Activated CD4-positive, alpha-beta T cell treated with anti-CD3 and anti-CD28 coated beads for 36 hours (primary cell): ENCODE measurements at regions of chr1 and their contacts with region 1.

Region 1: GRCh38 chr1:151008190-151008860 is at the start of gene PRUNE1:
- DNase-seq: peak; percentile 99
- ATAC-seq: peak; percentile 84
- H3K4me3 Mint-ChIP-seq: peak within 1 kb of the TSS; percentile 90
- H3K27ac Mint-ChIP-seq: peak within 1 kb of the TSS; percentile 96
- H3K4me1 Mint-ChIP-seq: peaks cover 63% of the 10 kb centered on the region
- H3K27me3 Mint-ChIP-seq: no peaks in the 10 kb centered on the region
- total RNA-seq, gene PRUNE1: 13.6 to 18.6 TPM

Region 2: GRCh38 chr1:150363426-150364230 is 644.7 kb before region 1 on chr1 and contains the start of gene RPRD2:
- CTCF ChIA-PET with region 1: no interaction called
- POLR2A ChIA-PET with region 1: no interaction called
- intact Hi-C with region 1: loop called in 1 of 2 experiments (anchors 2 kb)
- DNase-seq: peak; percentile 99
- ATAC-seq: peak; percentile 95
- H3K4me3 Mint-ChIP-seq: peak within 1 kb of the TSS; percentile 91
- H3K27ac Mint-ChIP-seq: peak within 1 kb of the TSS; percentile 99
- H3K4me1 Mint-ChIP-seq: peaks cover 13% of the 10 kb centered on the region
- H3K27me3 Mint-ChIP-seq: no peaks in the 10 kb centered on the region
- total RNA-seq, gene RPRD2: 24.4 to 32.2 TPM

Region 3: DNA sequence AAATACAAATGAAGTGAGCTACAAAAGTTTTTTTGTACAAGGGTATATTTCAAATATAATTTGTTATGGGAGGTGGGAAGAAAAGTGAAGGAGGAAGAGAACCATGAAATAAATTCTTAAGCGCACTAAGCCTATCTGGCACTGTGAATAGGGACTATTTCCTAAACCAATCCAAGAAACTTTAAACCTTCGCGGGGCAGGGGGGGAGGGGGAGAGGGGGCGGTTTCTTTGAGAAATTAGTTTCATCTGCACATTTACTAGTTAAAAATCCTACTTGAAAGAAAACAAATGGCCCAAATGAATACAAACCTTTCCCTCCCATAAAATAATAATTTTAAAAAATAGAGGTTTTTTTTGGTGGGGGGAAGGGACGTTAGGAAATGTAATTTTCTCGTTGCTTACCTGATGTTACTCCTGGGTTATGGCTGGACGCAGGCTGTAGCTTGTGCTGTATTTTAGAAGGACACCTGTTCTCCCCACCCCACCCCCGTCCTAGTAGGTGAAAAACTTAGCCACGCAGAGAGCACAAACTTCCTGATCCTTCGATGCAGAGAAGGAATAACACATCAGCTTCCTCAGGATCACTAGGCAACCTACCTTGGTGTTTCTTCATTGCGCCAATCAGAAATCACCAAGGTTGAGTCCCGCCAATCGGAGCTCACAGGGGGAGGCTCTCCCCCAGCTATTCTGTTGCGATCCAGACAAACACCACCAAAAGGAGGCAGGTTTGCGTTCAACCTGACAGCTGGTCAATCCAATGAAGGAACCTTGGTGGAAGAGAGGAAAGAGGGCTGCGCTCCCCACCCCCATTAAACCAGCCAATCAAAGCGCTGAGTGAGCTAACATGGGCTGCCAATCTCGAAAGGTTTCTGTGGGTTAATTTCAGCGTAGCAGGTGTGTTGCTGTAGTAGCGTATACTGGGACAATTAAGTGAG is 311.5 kb before region 1 on chr1 and contains the start of gene GOLPH3L:
- CTCF ChIA-PET with region 1: no interaction called
- POLR2A ChIA-PET with region 1: no interaction called
- intact Hi-C with region 1: loop called in 1 of 2 experiments (anchors 2 kb)
- DNase-seq: peak; percentile 93
- ATAC-seq: peak; percentile 100
- H3K4me3 Mint-ChIP-seq: peak within 1 kb of the TSS; percentile 98
- H3K27ac Mint-ChIP-seq: peak within 1 kb of the TSS; percentile 92
- H3K4me1 Mint-ChIP-seq: peaks cover 21% of the 10 kb centered on the region
- H3K27me3 Mint-ChIP-seq: peaks cover 3% of the 10 kb centered on the region
- total RNA-seq, gene GOLPH3L: 24.2 to 29.1 TPM

Region 4: DNA sequence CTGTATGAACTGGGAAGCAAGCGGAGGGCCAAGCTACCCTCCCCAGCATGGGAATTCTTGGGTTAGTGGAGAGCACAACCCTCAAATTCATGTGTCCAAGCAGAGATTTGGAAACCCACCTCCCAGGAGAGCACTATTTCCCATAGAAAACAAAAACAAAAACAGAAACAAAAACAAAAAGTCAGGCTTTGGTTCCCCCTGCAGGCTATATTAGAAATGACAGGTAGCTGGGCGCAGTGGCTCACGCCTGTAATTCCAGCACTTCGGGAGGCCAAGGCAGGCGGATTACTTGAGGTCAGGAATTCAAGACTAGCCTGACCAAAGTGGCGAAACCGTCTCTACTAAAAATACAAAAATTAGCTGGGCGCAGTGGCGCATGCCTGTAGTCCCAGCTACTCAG is 12.4 kb before region 1 on chr1:
- CTCF ChIA-PET with region 1: interaction called, 68 read pairs
- POLR2A ChIA-PET with region 1: no interaction called
- intact Hi-C with region 1: no loop called
- DNase-seq: peak; percentile 47
- ATAC-seq: peak; percentile 34
- H3K4me3 Mint-ChIP-seq: no peak overlapping the region
- H3K27ac Mint-ChIP-seq: no peak overlapping the region
- H3K4me1 Mint-ChIP-seq: peaks cover 18% of the 10 kb centered on the region
- H3K27me3 Mint-ChIP-seq: no peaks in the 10 kb centered on the region

Region 5: DNA sequence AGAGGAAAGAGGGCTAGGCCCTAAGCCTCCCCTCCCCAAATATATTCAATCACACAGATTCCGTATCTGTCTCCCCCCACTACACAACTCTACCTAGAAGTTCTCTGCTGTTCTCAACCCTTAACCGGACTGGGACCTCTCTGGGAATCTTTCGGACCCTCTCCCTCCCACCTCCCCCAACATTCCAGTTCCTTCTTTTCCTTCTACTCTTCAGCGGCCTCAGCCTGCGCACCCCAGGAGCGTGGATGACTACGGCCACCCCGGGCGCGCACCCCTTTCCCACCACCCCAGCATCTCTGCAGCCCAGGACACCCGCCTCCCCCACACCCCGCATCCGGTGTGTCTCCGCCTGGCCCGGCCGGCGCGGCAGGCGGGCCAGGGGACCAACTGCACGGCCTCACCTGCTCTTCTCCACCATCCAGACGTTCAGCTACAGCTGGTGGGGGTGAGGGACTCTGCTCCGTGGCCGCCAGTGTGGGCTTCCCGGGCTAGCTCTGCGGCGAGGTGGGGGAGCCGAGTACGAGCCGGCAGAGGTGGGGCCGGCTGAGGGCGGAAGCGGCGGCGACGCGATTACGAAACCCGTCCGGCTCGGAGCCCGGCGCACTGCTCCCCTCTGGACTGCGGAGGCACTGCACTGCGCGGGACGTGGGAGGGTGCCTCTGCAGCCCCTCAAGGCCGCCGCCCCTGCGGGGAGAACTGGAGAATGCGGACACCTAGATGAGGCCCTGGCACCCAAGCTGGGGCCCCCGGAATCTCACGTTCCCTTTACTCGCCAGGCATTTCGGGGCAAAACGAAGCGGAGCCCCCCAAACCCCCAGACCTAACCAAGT is 51.0 kb after region 1 on chr1 and contains the start of gene CDC42SE1:
- CTCF ChIA-PET with region 1: interaction called, 7 read pairs
- POLR2A ChIA-PET with region 1: no interaction called
- intact Hi-C with region 1: loop called (anchors 1 to 2 kb)
- DNase-seq: peak; percentile 92
- ATAC-seq: peak; percentile 75
- H3K4me3 Mint-ChIP-seq: peak within 1 kb of the TSS; percentile 93
- H3K27ac Mint-ChIP-seq: peak within 1 kb of the TSS; percentile 98
- H3K4me1 Mint-ChIP-seq: peaks cover 54% of the 10 kb centered on the region
- H3K27me3 Mint-ChIP-seq: no peaks in the 10 kb centered on the region
- total RNA-seq, gene CDC42SE1: 95.4 to 101 TPM

Region 6: GRCh38 chr1:151165738-151166505 is 157.6 kb after region 1 on chr1 and contains the starts of genes LYSMD1 and SCNM1:
- CTCF ChIA-PET with region 1: no interaction called
- POLR2A ChIA-PET with region 1: no interaction called
- intact Hi-C with region 1: loop called in 1 of 2 experiments (anchors 1 kb)
- DNase-seq: peak; percentile 98
- ATAC-seq: peak; percentile 96
- H3K4me3 Mint-ChIP-seq: peak within 1 kb of the TSS; percentile 92
- H3K27ac Mint-ChIP-seq: peak within 1 kb of the TSS; percentile 98
- H3K4me1 Mint-ChIP-seq: peaks cover 48% of the 10 kb centered on the region
- H3K27me3 Mint-ChIP-seq: no peaks in the 10 kb centered on the region
- total RNA-seq, gene LYSMD1: 4.3 to 5.1 TPM
- total RNA-seq, gene SCNM1: 64.3 to 90.8 TPM

Region 7: GRCh38 chr1:151281969-151282882 is 273.9 kb after region 1 on chr1 and contains the start of gene ZNF687:
- CTCF ChIA-PET with region 1: no interaction called
- POLR2A ChIA-PET with region 1: interaction called, 3 read pairs
- intact Hi-C with region 1: loop called in 1 of 2 experiments (anchors 1 kb)
- DNase-seq: peak; percentile 99
- ATAC-seq: peak; percentile 93
- H3K4me3 Mint-ChIP-seq: peak within 1 kb of the TSS; percentile 81
- H3K27ac Mint-ChIP-seq: peak within 1 kb of the TSS; percentile 95
- H3K4me1 Mint-ChIP-seq: peaks cover 27% of the 10 kb centered on the region
- H3K27me3 Mint-ChIP-seq: no peaks in the 10 kb centered on the region
- total RNA-seq, gene ZNF687: 27.2 to 30.1 TPM